Activated CD8-positive, alpha-beta T cell treated with anti-CD3 and anti-CD28 coated beads for 36 hours (primary cell): ENCODE measurements at regions of chr22 and their contacts with region 1.

Region 1: GRCh38 chr22:30253205-30253852 is 6.8 kb upstream of the LIF start:
- DNase-seq: no peak
- ATAC-seq: no peak
- H3K4me3 Mint-ChIP-seq: no peak overlapping the region
- H3K27ac Mint-ChIP-seq: no peak overlapping the region
- H3K4me1 Mint-ChIP-seq: peaks cover 46% of the 10 kb centered on the region
- H3K27me3 Mint-ChIP-seq: peaks cover 3% of the 10 kb centered on the region
- CTCF ChIP-seq: no peak

Region 2: GRCh38 chr22:30116362-30117117 is 136.8 kb before region 1 on chr22:
- CTCF ChIA-PET with region 1: interaction called, 19 read pairs
- POLR2A ChIA-PET with region 1: no interaction called
- intact Hi-C with region 1: no loop called
- DNase-seq: no peak
- ATAC-seq: peak; percentile 74
- H3K4me3 Mint-ChIP-seq: no peak overlapping the region
- H3K27ac Mint-ChIP-seq: no peak overlapping the region
- H3K4me1 Mint-ChIP-seq: peaks cover 13% of the 10 kb centered on the region
- H3K27me3 Mint-ChIP-seq: peaks cover 6% of the 10 kb centered on the region
- CTCF ChIP-seq: no peak

Region 3: GRCh38 chr22:30121960-30122359 is 131.4 kb before region 1 on chr22:
- CTCF ChIA-PET with region 1: interaction called, 19 read pairs
- POLR2A ChIA-PET with region 1: no interaction called
- intact Hi-C with region 1: no loop called
- DNase-seq: peak; percentile 19
- ATAC-seq: peak; percentile 61
- H3K4me3 Mint-ChIP-seq: no peak overlapping the region
- H3K27ac Mint-ChIP-seq: no peak overlapping the region
- H3K4me1 Mint-ChIP-seq: peaks cover 17% of the 10 kb centered on the region
- H3K27me3 Mint-ChIP-seq: peaks cover 8% of the 10 kb centered on the region
- CTCF ChIP-seq: no peak

Region 4: DNA sequence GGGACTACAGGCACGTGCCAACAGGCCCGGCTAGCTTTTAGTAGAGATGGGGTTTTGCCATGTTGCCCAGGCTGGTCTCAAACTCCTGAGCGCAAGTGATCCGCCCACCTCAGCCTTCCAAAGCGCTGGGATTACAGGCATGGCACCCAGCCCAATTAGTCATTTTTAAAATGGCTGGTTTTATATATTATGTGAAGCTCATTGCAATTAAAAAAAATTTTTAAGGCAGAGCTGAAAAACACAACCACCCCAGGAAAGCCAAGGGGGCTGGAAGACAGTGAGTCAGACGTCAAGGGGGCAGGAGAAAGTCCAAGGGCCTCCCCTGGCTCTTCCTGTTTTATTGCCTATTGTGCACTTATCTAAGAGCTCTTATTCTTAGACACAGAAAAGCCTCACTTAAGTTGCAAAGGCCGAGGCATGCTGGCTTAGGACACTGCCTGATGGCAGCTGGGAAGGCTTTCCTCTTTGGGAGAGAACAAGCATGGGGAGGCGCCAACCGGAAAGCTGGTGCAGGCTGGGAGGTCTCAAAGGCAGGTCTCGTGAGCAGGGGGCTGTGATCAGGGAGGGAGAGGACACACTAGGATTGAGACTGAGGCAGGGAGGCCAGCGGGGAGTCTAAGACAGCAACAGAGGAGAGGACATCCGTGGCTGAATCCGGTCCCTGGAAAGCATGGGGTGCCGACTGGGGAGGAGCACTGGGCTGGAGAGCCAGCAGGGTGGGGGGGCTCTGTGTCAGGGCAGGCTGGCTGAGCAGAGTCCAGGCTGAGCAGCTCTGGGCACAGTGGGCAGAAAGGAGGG is 24.4 kb after region 1 on chr22:
- CTCF ChIA-PET with region 1: interaction called, 12 read pairs
- POLR2A ChIA-PET with region 1: interaction called, 4 read pairs
- intact Hi-C with region 1: no loop called
- DNase-seq: no peak
- ATAC-seq: no peak
- H3K4me3 Mint-ChIP-seq: no peak overlapping the region
- H3K27ac Mint-ChIP-seq: no peak overlapping the region
- H3K4me1 Mint-ChIP-seq: peaks cover 46% of the 10 kb centered on the region
- H3K27me3 Mint-ChIP-seq: no peaks in the 10 kb centered on the region
- CTCF ChIP-seq: no peak

Region 5: GRCh38 chr22:30314915-30315314 is 61.6 kb after region 1 on chr22:
- CTCF ChIA-PET with region 1: no interaction called
- POLR2A ChIA-PET with region 1: no interaction called
- intact Hi-C with region 1: no loop called
- DNase-seq: peak; percentile 69
- ATAC-seq: peak; percentile 48
- H3K4me3 Mint-ChIP-seq: no peak overlapping the region
- H3K27ac Mint-ChIP-seq: peak overlapping the region; percentile 80
- H3K4me1 Mint-ChIP-seq: peaks cover 93% of the 10 kb centered on the region
- H3K27me3 Mint-ChIP-seq: no peaks in the 10 kb centered on the region
- CTCF ChIP-seq: no peak

Region 6: DNA sequence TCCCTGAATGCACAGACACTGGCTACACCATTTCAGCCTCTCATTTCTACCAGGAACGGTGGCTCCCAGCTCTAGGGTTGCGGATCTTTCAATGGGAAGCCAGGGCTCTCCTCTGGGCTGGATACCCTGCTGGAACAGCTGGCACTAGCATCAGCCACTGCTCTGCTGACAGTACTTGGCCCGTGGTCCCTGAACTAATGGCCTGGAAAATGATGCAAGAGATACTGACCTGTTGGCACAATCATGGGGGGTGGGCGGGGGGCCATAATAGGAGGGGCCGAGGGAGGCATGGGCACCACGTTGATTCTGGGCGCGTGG is 84.1 kb after region 1 on chr22:
- CTCF ChIA-PET with region 1: no interaction called
- POLR2A ChIA-PET with region 1: no interaction called
- intact Hi-C with region 1: no loop called
- DNase-seq: no peak
- ATAC-seq: no peak
- H3K4me3 Mint-ChIP-seq: no peak overlapping the region
- H3K27ac Mint-ChIP-seq: no peak overlapping the region
- H3K4me1 Mint-ChIP-seq: peaks cover 27% of the 10 kb centered on the region
- H3K27me3 Mint-ChIP-seq: no peaks in the 10 kb centered on the region
- CTCF ChIP-seq: no peak